Activated CD4-positive, alpha-beta T cell treated with anti-CD3 and anti-CD28 coated beads, Interleukin-2, amount 10 ng/mL, durations not matched to agents 24 days and 14 days (primary cell): ENCODE measurements at regions of chr1 and their contacts with region 1.

Region 1: GRCh38 chr1:169586395-169587255 is at the start of gene F5:
- DNase-seq: peak; percentile 92
- H3K4me3 Mint-ChIP-seq: peak within 1 kb of the TSS; percentile 95
- H3K27ac Mint-ChIP-seq: peak within 1 kb of the TSS; percentile 92
- H3K4me1 Mint-ChIP-seq: peaks cover 62% of the 10 kb centered on the region
- H3K27me3 Mint-ChIP-seq: no peaks in the 10 kb centered on the region
- total RNA-seq, gene F5: 46.3 and 51.3 TPM in 2 replicates

Region 2: DNA sequence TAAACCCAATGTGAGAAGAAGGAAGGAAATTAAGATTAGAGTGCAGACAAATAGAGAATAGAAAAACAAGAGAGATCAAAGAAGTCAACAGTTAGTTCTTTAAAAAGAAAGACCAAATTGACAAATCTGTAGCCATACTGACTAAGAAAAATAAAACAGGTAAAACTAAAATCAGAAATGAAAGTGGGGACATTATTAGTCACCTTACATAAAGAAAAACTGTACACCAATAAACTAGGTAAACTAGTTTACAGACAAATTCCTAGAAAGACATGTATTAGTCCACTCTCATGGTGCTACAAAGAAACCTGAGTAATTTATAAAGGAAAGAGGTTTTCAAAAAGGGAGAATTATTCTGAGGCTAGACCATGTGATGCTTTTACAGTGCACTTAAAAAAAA is 196.3 kb before region 1 on chr1:
- intact Hi-C with region 1: loop called (anchors 1 kb)
- DNase-seq: no peak
- H3K4me3 Mint-ChIP-seq: no peak overlapping the region
- H3K27ac Mint-ChIP-seq: peak overlapping the region; percentile 16
- H3K4me1 Mint-ChIP-seq: peaks cover 10% of the 10 kb centered on the region
- H3K27me3 Mint-ChIP-seq: no peaks in the 10 kb centered on the region

Region 3: GRCh38 chr1:169529068-169529696 is 57.4 kb before region 1 on chr1:
- intact Hi-C with region 1: no loop called
- DNase-seq: peak; percentile 63
- H3K4me3 Mint-ChIP-seq: peak overlapping the region; percentile 70
- H3K27ac Mint-ChIP-seq: no peak overlapping the region
- H3K4me1 Mint-ChIP-seq: peaks cover 12% of the 10 kb centered on the region
- H3K27me3 Mint-ChIP-seq: no peaks in the 10 kb centered on the region

Region 4: DNA sequence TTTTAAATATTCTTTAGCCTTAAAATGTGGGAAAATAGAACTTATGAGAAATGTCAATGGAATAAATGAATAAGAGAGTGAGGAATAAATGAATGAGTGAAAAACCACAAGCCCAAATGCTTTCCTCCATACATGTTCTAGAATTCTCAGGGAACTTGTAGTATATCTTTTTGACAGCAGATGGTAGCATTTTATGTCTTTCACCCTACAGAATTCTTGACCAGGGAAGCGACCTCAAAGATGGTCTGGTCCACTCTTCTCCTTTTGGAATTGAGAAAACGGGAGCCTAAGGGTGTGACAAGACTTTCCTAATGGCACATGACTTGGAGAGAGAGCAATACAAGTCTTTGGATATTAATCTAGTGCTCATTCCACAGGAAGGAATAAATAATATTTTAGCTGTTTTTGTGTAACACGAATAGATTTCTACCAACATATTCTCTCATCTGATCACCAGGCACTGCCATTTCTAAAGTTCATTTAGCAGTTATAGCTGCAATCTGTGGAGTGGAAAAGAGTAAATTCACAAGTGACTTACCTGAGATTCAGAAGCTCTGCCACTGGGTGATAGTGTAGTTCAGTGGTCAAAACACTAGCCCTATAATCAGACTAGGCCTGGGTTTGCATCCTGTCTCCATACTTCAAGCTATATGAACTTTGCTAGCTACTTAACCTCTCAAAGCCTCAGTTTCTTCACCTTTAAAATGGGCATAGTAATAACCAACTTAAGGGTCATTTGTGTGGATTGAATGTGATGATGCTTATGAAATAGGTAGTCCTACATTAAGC is 14.7 kb after region 1 on chr1:
- intact Hi-C with region 1: loop called (anchors 2 kb)
- DNase-seq: peak; percentile 65
- H3K4me3 Mint-ChIP-seq: no peak overlapping the region
- H3K27ac Mint-ChIP-seq: peak overlapping the region; percentile 65
- H3K4me1 Mint-ChIP-seq: peaks cover 45% of the 10 kb centered on the region
- H3K27me3 Mint-ChIP-seq: no peaks in the 10 kb centered on the region

Region 5: DNA sequence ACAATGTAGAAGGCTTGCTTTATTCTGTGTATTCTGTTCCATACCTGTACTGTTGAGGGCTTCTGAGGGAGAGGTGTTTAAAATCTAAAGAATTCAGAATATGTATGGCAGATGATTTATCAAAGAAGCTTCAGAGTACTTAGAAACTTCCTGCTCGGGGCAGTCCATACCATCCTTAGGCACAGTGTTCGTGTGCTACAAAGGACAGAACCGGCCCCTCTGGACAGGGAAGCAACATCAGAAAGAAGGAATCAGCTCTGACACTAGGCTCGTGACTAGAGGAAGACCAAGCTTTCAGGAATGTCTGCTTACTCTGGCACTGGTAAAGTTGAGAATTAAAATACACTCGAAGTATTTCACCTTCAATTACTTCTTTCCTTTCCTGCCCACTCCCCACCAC is 29.2 kb after region 1 on chr1:
- intact Hi-C with region 1: no loop called
- DNase-seq: no peak
- H3K4me3 Mint-ChIP-seq: no peak overlapping the region
- H3K27ac Mint-ChIP-seq: no peak overlapping the region
- H3K4me1 Mint-ChIP-seq: peaks cover 5% of the 10 kb centered on the region
- H3K27me3 Mint-ChIP-seq: no peaks in the 10 kb centered on the region

Region 6: DNA sequence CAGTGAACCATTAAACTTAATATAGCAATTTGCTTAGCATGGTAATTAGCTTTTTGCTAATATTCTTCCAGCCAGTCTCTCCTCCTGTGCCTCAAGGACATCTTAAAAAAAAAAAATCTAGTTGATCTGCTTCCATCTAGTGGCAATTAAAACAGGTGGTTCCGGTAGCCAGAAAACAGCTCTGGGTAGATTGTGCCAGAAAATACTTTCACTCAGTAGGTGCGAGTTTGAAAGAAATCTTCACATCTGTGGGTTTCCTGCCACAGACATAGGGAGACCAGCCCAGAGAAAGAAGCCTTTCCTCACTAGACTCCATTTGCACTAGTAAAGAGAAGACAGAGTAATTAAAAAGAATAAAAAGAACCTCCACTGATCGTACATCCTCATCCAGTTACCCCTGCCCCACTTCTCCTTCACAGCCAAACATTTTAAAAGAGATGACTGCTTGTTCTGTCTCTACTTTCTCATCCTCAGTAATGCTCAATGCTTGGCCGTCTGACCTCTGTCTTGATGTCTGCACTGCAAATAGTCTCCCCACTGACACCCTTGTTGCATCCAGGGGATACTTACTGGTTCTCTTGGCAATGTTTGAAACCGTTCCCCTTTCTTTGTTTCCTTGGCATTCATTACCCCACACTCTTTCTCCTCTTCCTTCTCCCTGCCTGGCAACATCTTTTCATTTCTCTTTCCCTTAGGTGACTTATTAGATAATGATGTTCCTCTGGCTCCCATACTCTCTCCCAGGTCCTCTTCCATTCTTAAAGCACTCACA is 107.9 kb after region 1 on chr1:
- intact Hi-C with region 1: loop called (anchors 1 kb)
- DNase-seq: peak; percentile 88
- H3K4me3 Mint-ChIP-seq: peak overlapping the region; percentile 26
- H3K27ac Mint-ChIP-seq: peak overlapping the region; percentile 79
- H3K4me1 Mint-ChIP-seq: peaks cover 84% of the 10 kb centered on the region
- H3K27me3 Mint-ChIP-seq: no peaks in the 10 kb centered on the region

Region 7: GRCh38 chr1:169809370-169810095 is 222.9 kb after region 1 on chr1:
- intact Hi-C with region 1: loop called (anchors 5 kb)
- DNase-seq: peak; percentile 63
- H3K4me3 Mint-ChIP-seq: no peak overlapping the region
- H3K27ac Mint-ChIP-seq: no peak overlapping the region
- H3K4me1 Mint-ChIP-seq: peaks cover 7% of the 10 kb centered on the region
- H3K27me3 Mint-ChIP-seq: no peaks in the 10 kb centered on the region